Right ventricle myocardium inferior (tissue), 1 donor: ENCODE measurements at regions of chr3 and their contacts with region 1.

Region 1: DNA sequence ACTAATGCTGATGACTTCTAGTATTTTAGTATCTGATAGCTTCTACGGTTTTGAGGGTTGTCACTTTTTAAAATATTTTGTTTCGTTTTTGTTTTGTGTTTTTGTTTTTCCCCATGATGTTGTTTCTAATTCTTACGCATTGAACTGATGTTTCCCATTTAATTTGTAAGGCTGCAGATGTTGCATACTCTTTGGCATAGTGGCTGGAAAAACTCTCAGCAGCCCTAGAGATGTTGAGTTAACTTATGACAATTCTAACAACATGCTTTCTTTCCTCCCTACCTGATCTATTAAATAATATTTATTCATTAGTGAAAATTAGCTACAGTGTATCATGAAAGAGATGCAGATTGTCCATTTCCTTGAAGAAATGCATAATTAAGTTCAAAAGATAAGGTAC is 559.3 kb upstream of the GRM7 start:
- DNase-seq: no peak
- ATAC-seq: no peak

Region 2: DNA sequence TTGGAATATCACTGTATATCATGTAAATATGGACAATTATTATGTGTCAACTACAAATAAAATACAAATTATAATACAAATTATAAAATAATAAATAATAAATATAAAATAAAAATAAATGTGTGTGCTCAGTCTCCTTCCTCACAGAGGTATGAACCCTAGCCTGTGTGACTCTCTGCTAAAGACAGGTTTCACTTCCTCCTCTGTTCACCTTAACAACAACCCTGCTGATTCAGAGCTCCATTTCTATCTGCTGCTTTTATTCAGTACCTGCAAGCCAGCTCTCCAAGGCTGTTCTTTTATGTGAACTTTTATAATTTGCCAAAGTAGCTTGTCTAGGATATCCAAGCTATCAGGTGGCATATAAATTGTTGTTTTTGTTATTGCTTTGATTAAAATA is 51.5 kb before region 1 on chr3:
- intact Hi-C with region 1: no loop called
- DNase-seq: no peak
- ATAC-seq: no peak

Region 3: DNA sequence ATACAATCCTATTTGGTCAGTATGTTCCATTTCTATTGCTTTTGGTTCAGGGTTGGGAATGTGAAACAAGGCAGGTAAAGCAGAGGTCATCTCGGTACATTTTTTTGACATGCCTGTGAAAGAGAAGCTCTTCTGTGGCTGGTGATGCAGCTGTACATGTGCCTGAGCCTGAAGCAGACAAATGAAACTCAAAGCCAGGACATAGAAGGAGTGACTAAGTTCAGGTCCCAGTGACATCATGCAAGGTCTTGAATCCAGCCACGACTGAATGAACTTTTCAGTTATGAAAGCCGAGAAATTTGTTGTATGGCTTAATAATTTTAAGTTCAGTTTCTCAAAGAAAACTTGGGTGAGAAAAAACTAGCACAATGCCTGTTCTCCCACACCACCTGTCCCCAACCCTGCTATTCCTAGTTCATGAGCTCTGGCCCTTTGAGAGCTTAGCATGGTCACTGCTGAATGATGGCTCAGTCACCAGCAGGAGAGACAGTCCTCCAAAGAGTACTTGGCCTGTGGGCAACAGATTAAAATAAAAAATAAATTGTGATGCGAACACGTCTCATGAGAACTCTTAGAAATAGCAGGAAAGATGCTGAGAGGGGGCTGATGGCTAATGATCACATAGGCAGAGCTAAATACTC is 41.0 kb before region 1 on chr3:
- intact Hi-C with region 1: loop called (anchors 2 kb)
- DNase-seq: no peak
- ATAC-seq: no peak

Region 4: GRCh38 chr3:6657591-6657990 is 356.0 kb after region 1 on chr3:
- intact Hi-C with region 1: no loop called
- DNase-seq: no peak
- ATAC-seq: no peak